Esophagus muscularis mucosa (tissue), 4 donors: ENCODE measurements at regions of chr1 and their contacts with region 1.

Region 1: DNA sequence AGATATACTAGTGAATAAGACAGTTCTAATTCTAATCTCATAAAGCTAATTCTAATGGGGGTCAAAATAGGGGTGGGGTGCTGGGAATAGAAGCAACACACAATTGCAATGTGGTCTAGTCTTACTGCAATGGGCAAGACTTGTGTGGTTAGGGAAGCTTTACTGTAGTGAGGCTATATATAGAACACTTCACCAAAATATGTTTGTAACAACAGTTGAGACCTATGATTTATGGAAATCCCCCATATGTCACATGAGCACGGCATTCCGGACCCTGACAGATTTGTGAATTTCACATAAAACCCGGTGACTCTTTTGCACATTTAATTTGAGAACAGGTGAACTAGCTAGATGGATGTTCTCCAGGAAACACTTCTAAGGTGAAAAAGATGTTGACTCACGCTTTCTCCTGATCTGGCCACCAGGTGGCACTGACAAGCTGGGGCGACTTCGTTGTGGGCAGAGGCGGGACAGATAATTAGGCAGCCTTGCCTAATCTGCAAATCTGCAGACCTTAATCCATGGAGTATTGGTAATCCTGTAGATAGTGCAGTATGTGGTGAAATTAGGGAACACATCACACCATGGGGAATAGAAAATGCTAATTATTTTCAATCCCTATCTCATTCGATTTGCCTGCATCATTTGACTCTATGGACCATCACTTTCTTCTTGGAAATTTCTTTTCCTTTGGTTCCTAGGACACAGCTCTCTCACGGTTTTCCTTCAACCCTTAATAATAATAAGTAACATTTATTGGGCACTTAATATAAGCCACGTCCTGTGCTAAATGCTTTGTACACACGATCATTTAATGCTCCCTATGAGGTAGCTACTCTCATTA is 37.7 kb downstream of the KIAA0040 start:
- DNase-seq: peak; percentile 95
- H3K4me3 ChIP-seq: no peak overlapping the region
- H3K27ac ChIP-seq: no peak overlapping the region
- H3K4me1 ChIP-seq: peaks cover 0 to 32% (median 26%) of the 10 kb centered on the region in 4 donors
- H3K27me3 ChIP-seq: no peaks in the 10 kb centered on the region
- CTCF ChIP-seq: peak; percentile 85 to 92 (median 88)
- EP300 ChIP-seq: no peak
- POLR2A ChIP-seq: no peak

Region 2: DNA sequence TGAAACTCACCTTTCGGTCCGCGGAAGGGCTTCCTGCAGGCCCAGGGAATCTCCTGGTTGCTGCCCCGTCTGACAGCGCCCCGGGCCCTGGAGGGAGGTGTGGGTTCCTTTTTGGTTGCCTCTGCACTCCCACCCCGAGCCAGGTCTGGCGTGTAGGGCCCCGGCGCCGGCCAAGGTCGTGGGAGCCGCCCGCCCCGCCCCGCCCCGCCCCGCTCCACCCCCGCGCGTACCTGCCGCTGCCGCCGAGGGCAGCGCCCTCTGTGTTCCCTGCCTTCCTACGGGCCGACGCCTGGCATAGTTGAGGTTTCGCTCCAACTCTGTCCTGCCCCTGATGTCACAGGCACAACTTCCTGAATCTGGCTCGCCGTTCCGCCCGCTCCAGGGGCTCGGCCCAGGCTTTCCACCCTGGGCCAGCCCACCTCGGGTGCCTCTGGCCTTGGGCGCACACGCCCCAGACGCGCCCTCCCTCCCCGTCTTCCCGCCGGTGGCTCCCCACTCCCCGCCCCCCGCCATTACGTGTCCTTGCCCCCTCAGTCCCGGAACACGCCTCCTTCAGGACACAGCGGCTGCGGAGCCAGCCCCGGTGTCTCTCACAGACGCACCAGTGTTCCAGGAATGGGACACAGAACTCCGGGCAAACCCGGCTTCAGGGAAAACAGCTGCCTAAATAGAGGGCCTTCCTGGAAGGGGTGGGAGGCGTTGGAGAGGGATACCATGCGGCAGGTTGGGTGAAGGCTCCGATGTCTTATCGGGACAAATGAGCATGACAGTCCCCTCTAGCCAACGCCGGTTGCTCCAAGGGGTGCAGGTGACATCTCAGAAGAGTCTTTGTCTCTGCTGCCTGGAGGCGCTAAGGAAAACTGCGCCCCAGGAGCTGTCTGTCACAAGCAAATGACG is 38.0 kb after region 1 on chr1 and contains the start of gene KIAA0040:
- intact Hi-C with region 1: loop called (anchors 5 kb)
- DNase-seq: peak; percentile 95
- H3K4me3 ChIP-seq: peak within 1 kb of the TSS; percentile 66 to 81 (median 68)
- H3K27ac ChIP-seq: peak within 1 kb of the TSS; percentile 86 to 89 (median 88)
- H3K4me1 ChIP-seq: peaks cover 37 to 52% (median 39%) of the 10 kb centered on the region in 4 donors
- H3K27me3 ChIP-seq: no peaks in the 10 kb centered on the region
- CTCF ChIP-seq: no peak
- EP300 ChIP-seq: peak; percentile 94
- POLR2A ChIP-seq: no peak
- total RNA-seq, gene KIAA0040: 37.0 to 109 (median 45.1) TPM

Region 3: GRCh38 chr1:175221666-175222175 is 66.9 kb after region 1 on chr1:
- intact Hi-C with region 1: loop called (anchors 2 kb)
- DNase-seq: peak; percentile 72
- H3K4me3 ChIP-seq: no peak overlapping the region
- H3K27ac ChIP-seq: no peak overlapping the region
- H3K4me1 ChIP-seq: peaks cover 6 to 32% (median 24%) of the 10 kb centered on the region in 4 donors
- H3K27me3 ChIP-seq: no peaks in the 10 kb centered on the region
- CTCF ChIP-seq: peak in 2 of 3 experiments; percentile 10 to 33
- EP300 ChIP-seq: no peak
- POLR2A ChIP-seq: no peak

Region 4: DNA sequence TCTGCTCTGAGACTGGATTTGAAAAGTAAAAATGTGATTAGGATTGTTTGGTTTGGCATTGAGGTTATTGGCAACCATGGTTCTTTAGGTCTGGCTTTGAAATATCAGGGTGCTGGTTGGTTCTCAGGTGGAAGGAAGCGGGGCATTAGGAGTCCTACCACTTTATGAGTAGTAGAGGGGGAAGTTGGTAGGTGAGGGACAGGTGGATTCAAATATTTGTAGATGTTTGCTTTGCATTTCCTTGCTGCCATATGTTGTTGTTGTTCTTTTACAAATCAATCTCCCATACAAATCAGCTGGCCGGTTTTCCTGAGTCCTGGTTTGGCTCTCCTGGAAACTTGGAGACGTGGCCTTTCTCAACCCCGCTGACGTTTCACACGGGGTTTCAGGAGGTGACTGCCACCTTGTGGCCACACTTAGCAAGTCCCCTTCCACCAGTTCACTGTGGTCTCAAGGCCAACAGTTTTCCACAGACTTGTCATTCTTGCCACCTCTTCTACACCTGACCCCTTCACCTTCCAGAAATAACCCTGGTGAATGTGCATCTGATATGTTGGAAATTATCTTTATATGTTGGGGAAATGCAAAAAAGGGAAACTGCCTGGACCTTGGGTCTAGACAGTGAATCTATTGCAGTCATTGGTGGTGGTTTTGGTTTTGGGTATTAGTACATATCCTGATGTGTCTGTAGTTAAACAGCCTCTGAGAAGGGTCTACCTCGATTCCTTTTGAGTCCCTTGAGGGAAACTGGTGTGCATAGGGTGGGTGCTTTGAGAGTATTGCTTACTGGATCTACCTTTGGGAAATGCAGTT is 164.8 kb after region 1 on chr1:
- intact Hi-C with region 1: loop called (anchors 1 kb)
- DNase-seq: no peak
- H3K4me3 ChIP-seq: no peak overlapping the region
- H3K27ac ChIP-seq: peak overlapping the region; percentile 41 to 72 (median 60)
- H3K4me1 ChIP-seq: peaks cover 18 to 25% (median 22%) of the 10 kb centered on the region in 4 donors
- H3K27me3 ChIP-seq: no peaks in the 10 kb centered on the region
- CTCF ChIP-seq: peak; percentile 88 to 91 (median 90)
- EP300 ChIP-seq: no peak
- POLR2A ChIP-seq: no peak

Region 5: GRCh38 chr1:175413367-175413766 is 258.5 kb after region 1 on chr1:
- intact Hi-C with region 1: no loop called
- DNase-seq: no peak
- H3K4me3 ChIP-seq: no peak overlapping the region
- H3K27ac ChIP-seq: no peak overlapping the region
- H3K4me1 ChIP-seq: no peaks in the 10 kb centered on the region
- H3K27me3 ChIP-seq: peaks cover 0 to 10% (median 0%) of the 10 kb centered on the region in 4 donors
- CTCF ChIP-seq: no peak
- EP300 ChIP-seq: no peak
- POLR2A ChIP-seq: no peak

Region 6: GRCh38 chr1:176073524-176074157 is 918.8 kb after region 1 on chr1:
- intact Hi-C with region 1: loop called (anchors 10 kb)
- DNase-seq: no peak
- H3K4me3 ChIP-seq: no peak overlapping the region
- H3K27ac ChIP-seq: no peak overlapping the region
- H3K4me1 ChIP-seq: no peaks in the 10 kb centered on the region
- H3K27me3 ChIP-seq: no peaks in the 10 kb centered on the region
- CTCF ChIP-seq: peak; percentile 23 to 59 (median 41)
- EP300 ChIP-seq: no peak
- POLR2A ChIP-seq: no peak